PC-9 (cell line): ENCODE measurements at regions of chr13 and their contacts with region 1.

Region 1: GRCh38 chr13:106619688-106620555 is 52.0 kb upstream of the ARGLU1 start:
- DNase-seq: peak in 1 of 2 experiments; percentile 12
- H3K4me3 ChIP-seq: no peak overlapping the region
- H3K27ac ChIP-seq: no peak overlapping the region
- H3K4me1 ChIP-seq: no peaks in the 10 kb centered on the region
- H3K27me3 ChIP-seq: 0 out of 2 replicates have a peak, but pooled peaks cover 11% of the 10 kb centered on the region
- CTCF ChIP-seq: peak; percentile 82

Region 2: GRCh38 chr13:104705031-104705750 is 1914.7 kb before region 1 on chr13:
- CTCF ChIA-PET with region 1: no interaction called
- POLR2A ChIA-PET with region 1: interaction called, 10 read pairs
- intact Hi-C with region 1: no loop called
- DNase-seq: no peak
- H3K4me3 ChIP-seq: no peak overlapping the region
- H3K27ac ChIP-seq: no peak overlapping the region
- H3K4me1 ChIP-seq: no peaks in the 10 kb centered on the region
- H3K27me3 ChIP-seq: no peaks in the 10 kb centered on the region
- CTCF ChIP-seq: no peak

Region 3: DNA sequence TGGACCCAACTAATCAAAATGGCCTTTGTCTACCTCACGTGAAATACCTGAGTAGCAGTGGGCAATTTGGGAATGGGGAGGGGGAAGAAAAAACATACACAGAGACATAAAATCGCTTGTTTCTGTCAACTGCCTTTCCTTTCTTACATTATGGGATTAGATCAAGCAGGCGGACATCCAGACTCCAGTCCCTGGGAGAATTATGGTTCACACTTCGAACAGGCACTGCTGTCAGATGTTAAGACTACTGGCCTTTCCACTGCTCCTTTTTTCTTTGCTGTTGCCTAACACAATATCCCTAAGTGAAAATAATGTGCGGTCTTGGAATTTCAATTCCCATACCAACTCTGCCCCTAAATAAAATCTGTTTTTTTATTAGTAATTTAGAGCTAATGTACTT is 1834.0 kb before region 1 on chr13:
- CTCF ChIA-PET with region 1: interaction called, 20 read pairs
- POLR2A ChIA-PET with region 1: no interaction called
- intact Hi-C with region 1: no loop called
- DNase-seq: no peak
- H3K4me3 ChIP-seq: no peak overlapping the region
- H3K27ac ChIP-seq: no peak overlapping the region
- H3K4me1 ChIP-seq: no peaks in the 10 kb centered on the region
- H3K27me3 ChIP-seq: no peaks in the 10 kb centered on the region
- CTCF ChIP-seq: no peak